ENCODE measurements at regions of chr2 and their contacts with region 1.

Region 1: DNA sequence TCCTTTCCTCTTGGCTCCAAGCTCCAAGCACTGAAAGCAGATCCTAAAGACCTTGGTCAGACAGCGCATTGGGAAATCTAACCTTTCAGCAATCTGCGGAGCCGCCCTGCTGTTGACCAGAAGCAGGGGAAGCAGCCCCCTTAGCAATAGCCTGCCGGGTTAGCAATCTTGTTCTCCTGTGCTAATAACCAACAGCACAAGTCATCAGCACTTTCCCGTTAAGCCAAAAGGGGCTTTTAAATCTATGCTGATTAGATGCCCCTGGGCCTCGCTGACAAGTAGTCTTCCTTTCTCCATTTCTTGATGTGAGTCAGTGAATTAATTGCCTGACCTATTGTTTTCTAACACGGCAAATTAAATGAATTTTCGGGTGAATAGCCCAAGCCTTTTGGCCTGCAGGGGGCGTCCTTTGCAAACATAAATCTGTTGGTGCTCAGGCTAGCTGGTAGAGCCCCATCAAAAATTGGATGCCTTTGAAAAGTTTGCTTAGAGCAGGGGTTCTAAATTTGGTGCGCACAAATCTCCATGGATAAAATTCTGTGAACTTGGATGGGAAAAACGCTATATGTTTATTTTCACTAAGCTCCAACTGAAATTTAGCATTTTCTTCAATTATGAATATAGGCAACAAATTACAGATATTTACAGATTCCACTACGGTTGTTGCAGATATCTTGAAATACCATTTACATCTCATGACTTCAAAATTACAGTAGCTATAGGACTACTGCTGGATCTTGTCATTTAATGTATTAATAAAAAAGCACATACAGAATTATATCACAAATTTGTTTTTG is 24.6 kb downstream of the MAIP1 start:
- DNase-seq: peak; percentile 83
- H3K4me3 ChIP-seq: no peak overlapping the region
- H3K27ac ChIP-seq: no peak overlapping the region
- H3K4me1 ChIP-seq: no peaks in the 10 kb centered on the region
- H3K27me3 ChIP-seq: no peaks in the 10 kb centered on the region
- CTCF ChIP-seq: peak; percentile 92

Region 2: DNA sequence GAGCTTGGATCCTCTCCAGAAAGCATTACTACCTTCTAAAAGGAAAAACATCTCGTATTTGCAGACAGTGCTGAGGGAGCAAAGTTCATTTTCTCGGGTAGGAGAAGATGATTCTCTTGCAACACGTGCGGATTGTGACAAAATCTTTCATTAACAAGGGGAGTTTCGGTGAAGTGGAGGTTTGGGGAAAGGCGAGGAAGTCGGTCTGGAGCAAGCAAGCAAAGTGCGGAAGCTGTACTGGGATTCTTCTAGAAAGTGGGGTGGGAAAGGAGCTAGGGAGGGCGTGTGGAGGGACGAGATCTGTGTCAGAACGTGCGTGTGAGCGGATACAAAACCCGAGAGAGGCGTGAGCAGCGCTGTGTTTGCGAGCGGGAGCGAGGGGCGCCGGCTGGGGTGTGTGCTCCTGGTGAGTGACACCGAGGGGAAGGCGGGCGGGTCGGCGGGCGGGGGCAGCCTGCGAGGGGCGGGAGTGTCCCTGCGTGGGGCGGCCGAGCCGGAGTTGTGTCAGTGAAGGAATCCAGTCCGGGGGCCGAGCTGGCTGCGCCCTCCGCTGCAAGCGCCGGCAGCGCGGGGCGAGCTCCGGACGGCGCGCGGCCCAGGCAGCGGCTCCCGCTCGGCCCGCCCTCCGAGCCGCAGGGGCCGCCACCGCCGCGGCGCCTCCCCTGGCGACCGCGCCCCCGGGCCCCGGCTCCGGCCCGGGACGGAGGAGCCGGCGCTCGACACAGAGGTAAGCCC is 326.3 kb after region 1 on chr2 and contains the start of gene SPATS2L:
- CTCF ChIA-PET with region 1: no interaction called
- POLR2A ChIA-PET with region 1: no interaction called
- intact Hi-C with region 1: loop called (anchors 5 kb)
- DNase-seq: peak; percentile 60
- H3K4me3 ChIP-seq: peak within 1 kb of the TSS; percentile 59
- H3K27ac ChIP-seq: no peak within 1 kb of the TSS
- H3K4me1 ChIP-seq: peaks cover 10% of the 10 kb centered on the region
- H3K27me3 ChIP-seq: peaks cover 11% of the 10 kb centered on the region
- CTCF ChIP-seq: no peak
- total RNA-seq, gene SPATS2L: 10.0 and 13.7 TPM in 2 replicates

Region 3: DNA sequence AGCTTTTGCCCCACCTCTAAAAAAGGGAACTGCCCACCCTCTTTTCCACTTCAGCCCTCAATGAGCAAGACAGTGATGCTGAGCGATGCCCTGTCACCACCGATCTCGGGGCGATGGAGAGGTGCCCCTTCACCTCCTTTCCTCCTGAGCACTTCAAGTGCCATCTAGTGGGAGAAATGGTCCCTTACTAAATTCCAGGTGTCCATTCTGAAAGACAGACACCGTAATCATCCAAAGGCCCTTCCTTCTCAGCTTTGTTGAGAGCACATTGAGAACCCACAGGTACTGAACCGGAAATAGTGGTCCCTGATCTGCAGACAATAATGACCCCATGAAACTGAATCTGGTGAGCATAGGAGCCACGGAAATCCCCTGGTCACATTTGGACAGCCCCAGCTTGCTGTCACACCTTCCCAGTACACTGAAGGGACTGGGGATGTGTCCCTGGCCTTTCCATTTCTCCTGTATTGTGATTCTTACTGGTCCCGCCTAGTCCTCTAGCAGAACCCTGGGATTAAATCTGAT is 491.4 kb after region 1 on chr2:
- CTCF ChIA-PET with region 1: no interaction called
- POLR2A ChIA-PET with region 1: no interaction called
- intact Hi-C with region 1: loop called (anchors 2 kb)
- DNase-seq: peak; percentile 51
- H3K4me3 ChIP-seq: no peak overlapping the region
- H3K27ac ChIP-seq: no peak overlapping the region
- H3K4me1 ChIP-seq: no peaks in the 10 kb centered on the region
- H3K27me3 ChIP-seq: no peaks in the 10 kb centered on the region
- CTCF ChIP-seq: peak; percentile 65

Region 4: GRCh38 chr2:200483729-200484198 is 503.7 kb after region 1 on chr2:
- CTCF ChIA-PET with region 1: interaction called, 3 read pairs
- POLR2A ChIA-PET with region 1: no interaction called
- intact Hi-C with region 1: loop called (anchors 2 kb)
- DNase-seq: peak; percentile 40
- H3K4me3 ChIP-seq: no peak overlapping the region
- H3K27ac ChIP-seq: no peak overlapping the region
- H3K4me1 ChIP-seq: no peaks in the 10 kb centered on the region
- H3K27me3 ChIP-seq: no peaks in the 10 kb centered on the region
- CTCF ChIP-seq: peak; percentile 59

Region 5: GRCh38 chr2:200735061-200735460 is 755.0 kb after region 1 on chr2:
- CTCF ChIA-PET with region 1: no interaction called
- POLR2A ChIA-PET with region 1: no interaction called
- intact Hi-C with region 1: loop called (anchors 10 kb)
- DNase-seq: peak; percentile 14
- H3K4me3 ChIP-seq: no peak overlapping the region
- H3K27ac ChIP-seq: no peak overlapping the region
- H3K4me1 ChIP-seq: peaks cover 8% of the 10 kb centered on the region
- H3K27me3 ChIP-seq: peaks cover 4% of the 10 kb centered on the region
- CTCF ChIP-seq: no peak

Region 6: DNA sequence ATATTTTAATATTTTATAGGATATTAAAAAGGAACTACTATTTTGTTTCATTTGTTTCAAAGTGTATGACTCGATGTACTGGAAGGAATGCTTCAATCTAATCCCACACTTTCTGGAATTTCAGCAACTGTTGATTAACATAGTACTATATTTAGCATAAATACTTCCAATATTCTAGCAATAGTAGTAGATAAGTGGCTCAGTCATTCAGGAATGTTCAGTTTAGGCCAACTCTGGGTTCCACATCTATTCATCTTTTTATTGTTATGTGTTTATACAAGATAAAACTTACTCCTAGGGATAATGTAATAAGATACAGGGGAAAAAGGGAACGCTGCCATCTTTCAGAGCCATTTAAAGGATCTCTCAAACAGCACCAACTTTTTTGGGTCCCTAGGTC is 1005.8 kb after region 1 on chr2:
- CTCF ChIA-PET with region 1: no interaction called
- POLR2A ChIA-PET with region 1: no interaction called
- intact Hi-C with region 1: no loop called
- DNase-seq: no peak
- H3K4me3 ChIP-seq: no peak overlapping the region
- H3K27ac ChIP-seq: no peak overlapping the region
- H3K4me1 ChIP-seq: no peaks in the 10 kb centered on the region
- H3K27me3 ChIP-seq: no peaks in the 10 kb centered on the region
- CTCF ChIP-seq: no peak

Region 7: GRCh38 chr2:201171259-201171814 is 1191.3 kb after region 1 on chr2:
- CTCF ChIA-PET with region 1: no interaction called
- POLR2A ChIA-PET with region 1: no interaction called
- intact Hi-C with region 1: loop called (anchors 10 kb)
- DNase-seq: no peak
- H3K4me3 ChIP-seq: no peak overlapping the region
- H3K27ac ChIP-seq: no peak overlapping the region
- H3K4me1 ChIP-seq: no peaks in the 10 kb centered on the region
- H3K27me3 ChIP-seq: no peaks in the 10 kb centered on the region
- CTCF ChIP-seq: no peak

Measured in A673 (cell line).